ENCODE measurements at regions of chrX and their contacts with region 1.

Region 1: DNA sequence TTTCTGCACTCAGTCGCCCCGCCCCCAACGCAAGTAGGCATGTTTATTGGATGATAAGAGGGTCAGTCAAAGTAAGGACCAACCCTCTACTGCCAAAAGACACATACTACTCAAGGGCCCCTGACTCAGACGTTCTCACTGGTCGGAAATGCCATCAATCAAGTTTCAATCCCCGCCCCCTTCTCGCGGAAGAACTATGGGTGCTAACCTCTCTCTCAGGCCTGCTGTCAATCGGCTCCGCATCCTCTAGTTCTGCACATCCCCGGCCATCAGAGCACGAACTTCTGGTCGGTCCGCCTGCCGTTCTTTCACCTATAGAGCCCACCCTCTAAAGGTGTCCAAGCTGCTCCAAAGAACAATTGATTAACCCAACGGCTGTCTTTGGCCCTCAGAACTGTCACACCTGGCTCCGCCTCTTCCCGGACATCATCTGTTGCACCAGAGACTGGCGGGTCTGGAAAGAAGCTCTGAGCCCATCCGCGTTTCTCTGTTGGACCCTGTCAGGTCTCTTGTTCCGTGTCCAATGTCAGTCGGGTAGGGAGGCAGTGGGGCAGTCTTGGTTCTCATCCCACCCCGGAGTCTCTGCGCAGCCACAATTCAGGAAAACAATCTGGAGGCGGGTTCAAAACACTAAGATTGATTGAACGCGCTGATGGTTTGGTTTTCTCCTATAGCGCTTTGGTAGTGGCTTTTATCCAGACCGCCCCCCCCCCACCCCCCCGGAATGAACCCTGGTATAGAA is 15.2 kb downstream of the NDUFB11 start:
- DNase-seq: peak; percentile 93
- ATAC-seq: peak; percentile 99
- H3K4me3 ChIP-seq: peak overlapping the region; percentile 63
- H3K27ac ChIP-seq: peak overlapping the region; percentile 4; the same call in 1 of the 2 replicates
- H3K4me1 ChIP-seq: no peaks in the 10 kb centered on the region
- H3K27me3 ChIP-seq: 0 out of 4 replicates have a peak, but pooled peaks cover 0 to 1% of the 10 kb centered on the region in 2 experiments
- CTCF ChIP-seq: no peak
- EP300 ChIP-seq: no peak
- POLR2A ChIP-seq: peak; percentile 85
- RAD21 ChIP-seq: no peak

Region 2: DNA sequence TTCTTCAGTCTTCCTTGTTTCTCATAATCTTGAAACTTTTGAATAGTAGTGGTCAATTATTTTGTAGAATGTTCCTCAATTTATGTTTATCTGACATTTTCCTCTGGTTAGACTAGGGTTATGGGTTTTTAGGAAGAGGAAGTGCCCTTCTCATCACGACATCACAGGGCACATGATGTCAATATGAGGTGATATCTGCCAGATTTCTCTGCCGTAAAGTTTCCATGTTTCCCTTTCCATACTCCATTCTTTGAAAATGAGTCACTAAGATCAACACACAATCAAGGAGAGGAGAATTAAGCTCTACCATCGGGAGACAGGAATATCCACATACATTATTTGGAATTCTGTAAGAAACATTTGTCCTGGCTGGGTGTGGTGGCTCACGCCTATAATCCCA is 264.0 kb before region 1 on chrX:
- CTCF ChIA-PET with region 1: no interaction called
- POLR2A ChIA-PET with region 1: no interaction called
- RAD21 ChIA-PET with region 1: no interaction called
- SMC1A ChIA-PET with region 1: no interaction called
- in situ Hi-C with region 1: no loop called
- intact Hi-C with region 1: no loop called
- DNase-seq: no peak
- ATAC-seq: no peak
- H3K4me3 ChIP-seq: no peak overlapping the region
- H3K27ac ChIP-seq: no peak overlapping the region
- H3K4me1 ChIP-seq: no peaks in the 10 kb centered on the region
- H3K27me3 ChIP-seq: no peaks in the 10 kb centered on the region
- CTCF ChIP-seq: no peak
- EP300 ChIP-seq: no peak
- POLR2A ChIP-seq: no peak
- RAD21 ChIP-seq: no peak

Region 3: GRCh38 chrX:47144626-47145394 is 15.5 kb after region 1 on chrX and contains the starts of genes NDUFB11 and RBM10:
- CTCF ChIA-PET with region 1: interaction called, 4 read pairs
- POLR2A ChIA-PET with region 1: interaction called, 7 read pairs
- RAD21 ChIA-PET with region 1: no interaction called
- SMC1A ChIA-PET with region 1: no interaction called
- in situ Hi-C with region 1: no loop called
- intact Hi-C with region 1: loop called (anchors 1 kb)
- DNase-seq: peak; percentile 76
- ATAC-seq: peak; percentile 96
- H3K4me3 ChIP-seq: peak within 1 kb of the TSS; percentile 80
- H3K27ac ChIP-seq: peak within 1 kb of the TSS; percentile 87
- H3K4me1 ChIP-seq: peaks cover 6% of the 10 kb centered on the region; the same call in 1 of the 2 replicates
- H3K27me3 ChIP-seq: no peaks in the 10 kb centered on the region
- CTCF ChIP-seq: peak; percentile 50 to 64 (median 54)
- EP300 ChIP-seq: no peak
- POLR2A ChIP-seq: peak; percentile 96
- RAD21 ChIP-seq: no peak
- polyA plus RNA-seq, gene NDUFB11: 16.1 to 44.5 TPM
- polyA plus RNA-seq, gene RBM10: 1.4 to 4.4 TPM

Region 4: DNA sequence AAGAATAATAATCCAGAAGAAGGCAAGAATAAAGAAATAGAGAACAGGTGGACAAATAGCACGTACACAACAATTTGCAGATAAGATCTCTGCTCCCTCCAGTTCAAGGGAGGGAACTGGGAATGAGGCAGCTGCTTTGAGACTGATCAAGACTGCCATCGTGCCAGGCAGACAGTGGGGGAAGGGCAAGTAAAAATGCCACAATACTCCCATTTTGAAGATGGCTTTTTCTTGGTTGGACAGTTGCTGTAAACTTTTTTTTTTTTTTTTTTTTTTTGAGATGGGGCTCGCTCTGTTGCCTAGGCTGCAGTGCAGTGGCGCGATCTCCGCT is 120.7 kb after region 1 on chrX:
- CTCF ChIA-PET with region 1: no interaction called
- POLR2A ChIA-PET with region 1: no interaction called
- RAD21 ChIA-PET with region 1: no interaction called
- SMC1A ChIA-PET with region 1: no interaction called
- in situ Hi-C with region 1: no loop called
- intact Hi-C with region 1: no loop called
- DNase-seq: no peak
- ATAC-seq: no peak
- H3K4me3 ChIP-seq: no peak overlapping the region
- H3K27ac ChIP-seq: no peak overlapping the region
- H3K4me1 ChIP-seq: no peaks in the 10 kb centered on the region
- H3K27me3 ChIP-seq: no peaks in the 10 kb centered on the region
- CTCF ChIP-seq: no peak
- EP300 ChIP-seq: no peak
- POLR2A ChIP-seq: no peak
- RAD21 ChIP-seq: no peak